Caco-2 (cell line): ENCODE measurements at regions of chr4 and their contacts with region 1.

Region 1: GRCh38 chr4:23135792-23136645 is 443.3 kb downstream of the GBA3 start:
- DNase-seq: peak in 1 of 2 experiments; percentile 54
- H3K4me3 ChIP-seq: no peak overlapping the region
- H3K4me3 Mint-ChIP-seq: no peak overlapping the region
- H3K27ac Mint-ChIP-seq: no peak overlapping the region
- H3K4me1 ChIP-seq: no peaks in the 10 kb centered on the region
- H3K4me1 Mint-ChIP-seq: no peaks in the 10 kb centered on the region
- H3K27me3 ChIP-seq: no peaks in the 10 kb centered on the region
- H3K27me3 Mint-ChIP-seq: no peaks in the 10 kb centered on the region
- CTCF ChIP-seq: peak; percentile 51 to 58

Region 2: GRCh38 chr4:22897520-22898108 is 238.4 kb before region 1 on chr4:
- CTCF ChIA-PET with region 1: no interaction called
- POLR2A ChIA-PET with region 1: no interaction called
- intact Hi-C with region 1: loop called (anchors 10 kb)
- DNase-seq: peak in 1 of 2 experiments; percentile 57
- H3K4me3 ChIP-seq: no peak overlapping the region
- H3K4me3 Mint-ChIP-seq: no peak overlapping the region
- H3K27ac Mint-ChIP-seq: no peak overlapping the region
- H3K4me1 ChIP-seq: no peaks in the 10 kb centered on the region
- H3K4me1 Mint-ChIP-seq: peaks cover 6% of the 10 kb centered on the region
- H3K27me3 ChIP-seq: no peaks in the 10 kb centered on the region
- H3K27me3 Mint-ChIP-seq: no peaks in the 10 kb centered on the region
- CTCF ChIP-seq: peak; percentile 63 to 65

Region 3: DNA sequence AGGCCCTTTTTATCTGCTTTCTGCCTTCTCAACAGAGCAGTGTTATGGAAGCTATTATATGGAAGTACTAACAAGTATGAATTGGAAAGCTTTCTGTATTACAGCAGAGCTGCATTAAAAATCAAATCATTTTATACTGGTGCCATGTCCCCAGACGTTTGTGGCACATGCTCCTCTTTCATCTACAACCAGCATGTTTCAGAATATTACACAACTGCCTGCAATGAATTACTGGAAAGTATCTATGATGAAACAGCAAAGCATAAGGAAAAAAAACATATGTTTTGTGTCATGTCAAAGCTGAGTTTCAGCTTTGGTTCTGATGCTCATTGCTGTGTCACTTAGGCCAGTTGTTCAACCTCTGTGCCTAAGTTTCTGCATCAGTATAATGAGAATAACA is 133.5 kb after region 1 on chr4:
- CTCF ChIA-PET with region 1: no interaction called
- POLR2A ChIA-PET with region 1: no interaction called
- intact Hi-C with region 1: loop called (anchors 10 kb)
- DNase-seq: no peak
- H3K4me3 ChIP-seq: no peak overlapping the region
- H3K4me3 Mint-ChIP-seq: no peak overlapping the region
- H3K27ac Mint-ChIP-seq: no peak overlapping the region
- H3K4me1 ChIP-seq: no peaks in the 10 kb centered on the region
- H3K4me1 Mint-ChIP-seq: no peaks in the 10 kb centered on the region
- H3K27me3 ChIP-seq: no peaks in the 10 kb centered on the region
- H3K27me3 Mint-ChIP-seq: peaks cover 2% of the 10 kb centered on the region
- CTCF ChIP-seq: no peak